CD14-positive monocyte (primary cell): ENCODE measurements at regions of chr1 and their contacts with region 1.

Region 1: GRCh38 chr1:151254217-151255213 is at the start of gene PSMD4:
- DNase-seq: peak; percentile 96 to 98 (median 96)
- H3K4me3 ChIP-seq: peak within 1 kb of the TSS; percentile 54 to 93 (median 72)
- H3K4me3 Mint-ChIP-seq: peak within 1 kb of the TSS; percentile 87 to 97
- H3K27ac ChIP-seq: peak within 1 kb of the TSS; percentile 76 to 96
- H3K27ac Mint-ChIP-seq: peak within 1 kb of the TSS; percentile 90 to 100 (median 99)
- H3K4me1 ChIP-seq: peaks cover 9 to 10% of the 10 kb centered on the region in 2 donors
- H3K4me1 Mint-ChIP-seq: peaks cover 26% of the 10 kb centered on the region
- H3K27me3 ChIP-seq: no peaks in the 10 kb centered on the region
- H3K27me3 Mint-ChIP-seq: no peaks in the 10 kb centered on the region
- CTCF ChIP-seq: no peak
- polyA plus RNA-seq, gene PSMD4: 232 to 266 (median 252) TPM

Region 2: GRCh38 chr1:151198255-151199127 is 56.0 kb before region 1 on chr1 and contains the start of gene PIP5K1A:
- intact Hi-C with region 1: loop called (anchors 2 to 5 kb)
- DNase-seq: peak; percentile 98 to 100 (median 99)
- H3K4me3 ChIP-seq: peak within 1 kb of the TSS; percentile 54 to 90 (median 67)
- H3K4me3 Mint-ChIP-seq: peak within 1 kb of the TSS; percentile 97 to 99
- H3K27ac ChIP-seq: peak within 1 kb of the TSS; percentile 89 to 90
- H3K27ac Mint-ChIP-seq: peak within 1 kb of the TSS; percentile 98 to 99 (median 99)
- H3K4me1 ChIP-seq: peaks cover 25 to 37% of the 10 kb centered on the region in 2 donors
- H3K4me1 Mint-ChIP-seq: peaks cover 42% of the 10 kb centered on the region
- H3K27me3 ChIP-seq: peaks cover 0 to 2% of the 10 kb centered on the region in 2 donors
- H3K27me3 Mint-ChIP-seq: peaks cover 4 to 8% (median 4%) of the 10 kb centered on the region in 3 donors
- CTCF ChIP-seq: no peak
- polyA plus RNA-seq, gene PIP5K1A: 10.8 to 47.7 (median 11.7) TPM

Region 3: GRCh38 chr1:151281969-151282882 is 27.7 kb after region 1 on chr1 and contains the start of gene ZNF687:
- intact Hi-C with region 1: loop called in 1 of 2 experiments (anchors 1 kb)
- DNase-seq: peak; percentile 99
- H3K4me3 ChIP-seq: peak within 1 kb of the TSS; percentile 63 to 96 (median 88)
- H3K4me3 Mint-ChIP-seq: peak within 1 kb of the TSS; percentile 99 to 100
- H3K27ac ChIP-seq: peak within 1 kb of the TSS; percentile 94 to 96
- H3K27ac Mint-ChIP-seq: peak within 1 kb of the TSS; percentile 99 to 100 (median 100)
- H3K4me1 ChIP-seq: peaks cover 43 to 61% of the 10 kb centered on the region in 2 donors
- H3K4me1 Mint-ChIP-seq: peaks cover 42% of the 10 kb centered on the region
- H3K27me3 ChIP-seq: no peaks in the 10 kb centered on the region
- H3K27me3 Mint-ChIP-seq: peaks cover 0 to 1% (median 0%) of the 10 kb centered on the region in 3 donors
- CTCF ChIP-seq: no peak
- polyA plus RNA-seq, gene ZNF687: 1.3 to 26.5 (median 1.8) TPM